ENCODE measurements at regions of chr3 and their contacts with region 1.

Region 1: DNA sequence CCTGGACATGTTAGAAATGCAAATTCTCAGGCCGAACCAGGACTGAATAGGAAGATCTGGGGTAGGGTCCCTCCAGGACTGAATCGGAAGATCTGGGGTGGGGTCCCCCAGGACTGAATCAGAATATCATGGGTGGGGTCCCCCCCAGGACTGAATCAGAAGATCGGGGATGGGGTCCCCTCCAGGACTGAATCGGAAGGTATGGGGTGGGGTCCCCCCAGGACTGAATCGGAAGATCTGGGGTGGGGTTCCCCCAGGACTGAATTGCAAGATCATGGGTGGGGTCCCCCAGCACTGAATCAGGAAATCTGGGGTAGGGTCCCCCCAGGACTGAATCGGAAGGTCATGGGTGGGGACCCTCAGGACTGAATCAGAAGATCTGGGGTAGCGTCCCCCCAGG is 48.2 kb upstream of the TNK2 start:
- DNase-seq: peak in 1 of 2 experiments; percentile 29
- H3K4me3 ChIP-seq: no peak overlapping the region
- H3K27ac ChIP-seq: no peak overlapping the region
- H3K4me1 ChIP-seq: peaks cover 13% of the 10 kb centered on the region
- H3K27me3 ChIP-seq: no peaks in the 10 kb centered on the region
- CTCF ChIP-seq: no peak

Region 2: GRCh38 chr3:195692354-195692685 is 264.3 kb before region 1 on chr3:
- CTCF ChIA-PET with region 1: no interaction called
- POLR2A ChIA-PET with region 1: no interaction called
- intact Hi-C with region 1: loop called (anchors 2 kb)
- DNase-seq: peak in 1 of 2 experiments; percentile 33
- H3K4me3 ChIP-seq: no peak overlapping the region
- H3K27ac ChIP-seq: no peak overlapping the region
- H3K4me1 ChIP-seq: peaks cover 12% of the 10 kb centered on the region
- H3K27me3 ChIP-seq: no peaks in the 10 kb centered on the region
- CTCF ChIP-seq: no peak

Region 3: DNA sequence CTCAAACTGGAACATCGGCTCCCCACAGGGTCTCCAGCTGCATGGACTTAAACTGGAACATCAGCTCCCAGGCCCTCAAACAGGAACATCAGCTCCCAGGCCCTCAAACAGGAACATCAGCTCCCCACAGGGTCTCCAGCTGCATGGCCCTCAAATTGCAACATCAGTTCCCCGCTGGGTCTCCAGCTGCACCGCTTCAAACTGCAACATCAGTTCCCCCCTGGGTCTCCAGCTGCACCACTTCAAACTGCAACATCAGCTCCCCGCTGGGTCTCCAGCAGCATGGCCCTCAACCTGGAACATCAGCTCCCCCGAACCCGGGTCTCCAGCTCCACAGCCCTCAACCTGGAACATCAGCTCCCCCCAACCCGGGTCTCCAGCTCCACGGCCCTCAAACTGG is 43.3 kb after region 1 on chr3:
- CTCF ChIA-PET with region 1: no interaction called
- POLR2A ChIA-PET with region 1: no interaction called
- intact Hi-C with region 1: no loop called
- DNase-seq: no peak
- H3K4me3 ChIP-seq: no peak overlapping the region
- H3K27ac ChIP-seq: no peak overlapping the region
- H3K4me1 ChIP-seq: no peaks in the 10 kb centered on the region
- H3K27me3 ChIP-seq: peaks cover 68% of the 10 kb centered on the region
- CTCF ChIP-seq: no peak

Measured in PC-9 (cell line).